ENCODE measurements at regions of chrX and their contacts with region 1.

Region 1: GRCh38 chrX:77785486-77786364 is at the start of gene ATRX:
- DNase-seq: peak; percentile 71
- H3K4me3 Mint-ChIP-seq: peak within 1 kb of the TSS; percentile 100
- H3K27ac Mint-ChIP-seq: peak within 1 kb of the TSS; percentile 100
- H3K4me1 Mint-ChIP-seq: peaks cover 20% of the 10 kb centered on the region
- H3K27me3 Mint-ChIP-seq: no peaks in the 10 kb centered on the region
- total RNA-seq, gene ATRX: 74.4 and 82.5 TPM in 2 replicates

Region 2: GRCh38 chrX:77675986-77676385 is 109.7 kb before region 1 on chrX:
- intact Hi-C with region 1: loop called (anchors 10 kb)
- DNase-seq: no peak
- H3K4me3 Mint-ChIP-seq: no peak overlapping the region
- H3K27ac Mint-ChIP-seq: no peak overlapping the region
- H3K4me1 Mint-ChIP-seq: no peaks in the 10 kb centered on the region
- H3K27me3 Mint-ChIP-seq: no peaks in the 10 kb centered on the region

Region 3: GRCh38 chrX:77749695-77750094 is 36.0 kb before region 1 on chrX:
- intact Hi-C with region 1: no loop called
- DNase-seq: no peak
- H3K4me3 Mint-ChIP-seq: no peak overlapping the region
- H3K27ac Mint-ChIP-seq: no peak overlapping the region
- H3K4me1 Mint-ChIP-seq: peaks cover 4% of the 10 kb centered on the region
- H3K27me3 Mint-ChIP-seq: no peaks in the 10 kb centered on the region

Region 4: DNA sequence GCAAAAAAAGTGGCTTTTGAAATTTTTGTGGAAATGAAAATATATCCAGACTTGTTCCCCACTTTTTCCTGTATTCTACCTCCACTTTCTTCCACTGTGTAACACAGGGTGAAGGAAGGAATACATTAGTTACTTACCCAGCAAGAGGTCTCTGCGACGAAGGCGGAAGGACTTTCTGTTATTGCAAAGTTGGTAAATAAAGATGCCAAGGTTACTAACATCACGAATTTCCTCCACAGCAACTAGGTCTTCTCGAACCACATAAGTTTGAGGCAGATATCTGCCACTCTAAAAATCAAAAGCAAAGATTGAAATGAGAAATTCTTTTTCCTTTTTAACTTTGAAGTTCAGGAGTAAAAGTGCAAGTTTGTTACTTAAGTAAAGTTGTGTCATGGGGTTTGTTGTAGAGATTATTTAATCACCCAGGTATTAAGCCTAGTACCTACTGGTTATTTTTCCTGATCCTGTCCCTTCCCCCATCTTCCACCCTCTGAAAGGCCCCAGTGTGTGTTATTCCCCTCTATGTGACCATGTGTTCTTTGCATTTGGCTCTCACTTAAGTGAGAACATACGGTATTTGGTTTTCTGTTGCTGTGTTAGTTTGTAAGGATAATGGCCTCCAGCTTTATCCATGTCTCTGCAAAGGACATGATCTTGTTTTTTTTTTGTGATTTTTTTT is 1575.6 kb after region 1 on chrX:
- intact Hi-C with region 1: loop called (anchors 5 kb)
- DNase-seq: no peak
- H3K4me3 Mint-ChIP-seq: peak overlapping the region; percentile 35
- H3K27ac Mint-ChIP-seq: peak overlapping the region; percentile 60
- H3K4me1 Mint-ChIP-seq: peaks cover 23% of the 10 kb centered on the region
- H3K27me3 Mint-ChIP-seq: no peaks in the 10 kb centered on the region